HepG2 (cell line): ENCODE measurements at regions of chr20 and their contacts with region 1.

Region 1: DNA sequence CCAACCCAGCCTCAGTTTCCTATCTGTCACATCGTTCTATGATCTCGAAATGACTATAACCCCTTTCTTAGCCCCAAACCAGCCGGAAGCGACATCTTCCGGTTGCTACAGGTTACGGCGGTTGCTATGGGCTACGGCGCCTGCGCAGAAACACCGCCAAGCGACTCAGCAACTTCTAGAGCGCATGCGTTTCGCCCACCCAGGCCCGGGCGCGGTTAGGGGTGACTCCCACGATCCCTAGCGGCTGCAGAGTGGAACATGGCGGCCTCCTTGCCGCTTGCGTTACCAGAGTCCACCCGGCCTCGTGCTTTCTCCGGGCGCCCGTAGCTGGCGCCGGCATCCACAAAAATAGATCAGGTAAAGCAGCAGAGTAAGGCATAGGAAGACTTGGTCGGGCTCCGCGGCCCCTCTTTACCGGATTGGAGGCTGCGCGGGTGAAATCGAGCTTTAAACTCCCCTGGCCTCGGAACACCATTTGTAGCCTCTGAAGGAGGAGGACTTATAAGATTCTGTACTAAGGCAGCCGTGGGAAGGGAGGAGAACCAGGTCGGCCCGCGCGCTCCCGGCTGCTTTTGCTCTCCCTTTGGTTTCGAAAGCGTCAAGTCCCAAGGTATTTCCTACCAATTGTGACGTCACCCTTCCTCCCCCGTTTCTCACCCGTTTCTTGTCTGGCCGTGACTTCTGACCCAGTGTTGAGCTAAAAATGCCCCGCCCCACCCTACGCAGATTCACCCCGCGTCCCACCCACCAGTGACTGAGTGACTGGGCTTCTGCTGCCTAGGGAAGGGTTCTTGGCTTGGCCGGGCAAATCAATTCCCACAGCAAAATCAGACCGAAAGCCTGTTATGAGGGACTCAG is 3.5 kb downstream of the SDCBP2 start:
- DNase-seq: peak; percentile 97
- ATAC-seq: peak; percentile 79
- H3K4me3 ChIP-seq: peak overlapping the region; percentile 80 to 98 (median 96)
- H3K27ac ChIP-seq: peak overlapping the region; percentile 98
- H3K4me1 ChIP-seq: peaks cover 69% of the 10 kb centered on the region
- H3K27me3 ChIP-seq: no peaks in the 10 kb centered on the region; a peak in 2 of 5 replicates
- CTCF ChIP-seq: peak; percentile 43; the same call in 1 of the 2 replicates
- EP300 ChIP-seq: peak in 1 of 2 experiments; percentile 20; a peak in 3 of 4 replicates
- POLR2A ChIP-seq: peak; percentile 95 to 98
- RAD21 ChIP-seq: peak; percentile 66

Region 2: GRCh38 chr20:1313236-1313964 is 12.0 kb before region 1 on chr20:
- CTCF ChIA-PET with region 1: no interaction called
- POLR2A ChIA-PET with region 1: interaction called, 8 read pairs
- in situ Hi-C with region 1: no loop called
- intact Hi-C with region 1: loop called (anchors 1 kb)
- DNase-seq: peak; percentile 71
- ATAC-seq: peak; percentile 83
- H3K4me3 ChIP-seq: no peak overlapping the region
- H3K27ac ChIP-seq: no peak overlapping the region
- H3K4me1 ChIP-seq: peaks cover 18% of the 10 kb centered on the region
- H3K27me3 ChIP-seq: peaks cover 0 to 3% of the 10 kb centered on the region in 2 experiments; a peak in 3 of 5 replicates
- CTCF ChIP-seq: peak; percentile 97
- EP300 ChIP-seq: no peak
- POLR2A ChIP-seq: no peak
- RAD21 ChIP-seq: peak; percentile 95

Region 3: DNA sequence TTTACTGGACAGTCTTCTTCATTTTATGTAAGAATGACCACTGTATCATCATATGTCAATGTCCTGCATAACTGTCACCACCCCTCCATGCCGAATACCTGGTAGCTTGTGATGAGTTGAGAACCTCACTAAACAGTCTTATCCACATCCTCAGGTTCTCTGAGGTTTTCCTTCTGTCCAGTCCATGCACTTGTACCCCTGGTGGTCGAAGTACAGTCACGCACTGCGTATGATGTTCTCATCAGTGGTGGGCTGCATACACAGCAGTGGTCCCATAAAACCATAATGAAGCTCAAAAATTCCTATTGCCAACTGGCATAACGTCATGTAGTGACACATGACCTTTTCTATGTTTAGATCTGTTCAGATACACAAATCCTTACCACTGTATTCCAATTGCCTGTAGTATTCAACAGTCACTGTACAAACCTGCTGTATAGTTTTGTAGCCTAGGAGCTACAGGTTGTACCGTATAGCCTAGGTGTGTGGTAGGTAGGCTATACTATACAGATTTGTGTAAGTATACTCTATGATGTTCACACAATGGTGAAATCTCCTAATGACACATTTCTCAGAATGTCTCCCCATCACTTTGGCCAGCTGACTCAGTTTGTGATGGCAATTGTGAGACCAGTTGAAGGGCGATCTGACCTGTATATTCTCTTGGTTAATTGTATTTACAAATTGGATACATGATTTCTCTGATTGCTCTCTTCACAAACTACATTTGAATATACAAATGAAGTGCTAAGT is 34.9 kb after region 1 on chr20:
- CTCF ChIA-PET with region 1: no interaction called
- POLR2A ChIA-PET with region 1: interaction called, 4 read pairs
- in situ Hi-C with region 1: no loop called
- intact Hi-C with region 1: loop called (anchors 5 kb)
- DNase-seq: no peak
- ATAC-seq: peak; percentile 66
- H3K4me3 ChIP-seq: no peak overlapping the region
- H3K27ac ChIP-seq: no peak overlapping the region
- H3K4me1 ChIP-seq: no peaks in the 10 kb centered on the region
- H3K27me3 ChIP-seq: no peaks in the 10 kb centered on the region
- CTCF ChIP-seq: no peak
- EP300 ChIP-seq: no peak
- POLR2A ChIP-seq: no peak
- RAD21 ChIP-seq: no peak

Region 4: GRCh38 chr20:1392823-1393506 is 67.6 kb after region 1 on chr20 and contains the start of gene FKBP1A:
- CTCF ChIA-PET with region 1: no interaction called
- POLR2A ChIA-PET with region 1: interaction called, 41 read pairs
- in situ Hi-C with region 1: no loop called
- intact Hi-C with region 1: loop called (anchors 1 kb)
- DNase-seq: peak; percentile 94
- ATAC-seq: peak; percentile 95
- H3K4me3 ChIP-seq: peak within 1 kb of the TSS; percentile 78 to 91 (median 91)
- H3K27ac ChIP-seq: peak within 1 kb of the TSS; percentile 36
- H3K4me1 ChIP-seq: peaks cover 53% of the 10 kb centered on the region
- H3K27me3 ChIP-seq: peaks cover 0 to 17% of the 10 kb centered on the region in 2 experiments; a peak in 2 of 5 replicates
- CTCF ChIP-seq: peak; percentile 48
- EP300 ChIP-seq: peak in 1 of 2 experiments; percentile 64; a peak in 3 of 4 replicates
- POLR2A ChIP-seq: peak; percentile 69 to 98
- RAD21 ChIP-seq: peak; percentile 71
- total RNA-seq, gene FKBP1A: 119 and 188 TPM in 2 replicates

Region 5: GRCh38 chr20:1466211-1467081 is 141.0 kb after region 1 on chr20 and contains the start of gene NSFL1C:
- CTCF ChIA-PET with region 1: no interaction called
- POLR2A ChIA-PET with region 1: interaction called, 32 read pairs
- in situ Hi-C with region 1: no loop called
- intact Hi-C with region 1: loop called (anchors 1 kb)
- DNase-seq: peak; percentile 92
- ATAC-seq: peak; percentile 87
- H3K4me3 ChIP-seq: peak within 1 kb of the TSS; percentile 85 to 99 (median 98)
- H3K27ac ChIP-seq: peak within 1 kb of the TSS; percentile 80
- H3K4me1 ChIP-seq: peaks cover 69% of the 10 kb centered on the region
- H3K27me3 ChIP-seq: no peaks in the 10 kb centered on the region; a peak in 2 of 5 replicates
- CTCF ChIP-seq: peak; percentile 95
- EP300 ChIP-seq: peak; percentile 46 to 72
- POLR2A ChIP-seq: peak; percentile 88
- RAD21 ChIP-seq: peak; percentile 93
- total RNA-seq, gene NSFL1C: 62.7 and 74.0 TPM in 2 replicates

Region 6: DNA sequence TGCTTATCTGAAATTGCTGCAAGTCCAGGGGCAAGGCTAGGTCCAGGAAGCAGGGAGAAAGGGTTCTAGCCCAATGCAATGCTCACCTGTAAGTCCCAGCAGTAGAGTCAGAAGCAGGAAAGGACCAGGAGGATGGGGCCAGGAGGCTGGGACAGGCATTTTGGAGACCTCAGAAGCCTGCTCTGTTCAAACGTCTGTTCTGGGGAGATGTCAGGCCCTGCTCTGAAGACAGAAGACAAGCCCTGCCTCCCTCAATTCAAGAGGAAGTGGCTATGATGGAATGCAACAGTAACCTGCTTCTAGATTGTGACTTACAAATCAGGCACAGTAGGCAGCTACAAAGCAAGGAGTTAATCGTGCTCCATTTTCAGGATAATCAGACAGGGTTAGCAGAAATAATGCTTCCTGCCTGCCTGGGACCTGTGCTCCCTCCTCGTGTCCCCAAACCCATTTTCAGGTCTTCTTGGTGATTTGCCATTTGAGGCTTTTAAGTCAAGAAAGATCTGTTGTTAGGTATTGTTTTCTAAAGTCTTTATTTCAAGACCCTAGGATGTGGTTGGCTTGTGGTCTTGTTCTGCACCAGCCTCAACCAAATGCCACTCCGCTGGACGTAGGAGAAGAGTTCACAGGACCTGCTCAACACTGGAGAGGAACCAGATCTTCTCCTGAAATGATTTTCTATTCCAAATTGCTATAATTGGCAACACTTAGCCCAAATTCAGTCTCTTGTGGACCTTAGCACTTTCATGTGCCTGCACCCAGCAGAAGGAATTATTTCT is 332.3 kb after region 1 on chr20 and contains the start of gene SIRPG:
- CTCF ChIA-PET with region 1: no interaction called
- POLR2A ChIA-PET with region 1: no interaction called
- in situ Hi-C with region 1: no loop called
- intact Hi-C with region 1: no loop called
- DNase-seq: no peak
- ATAC-seq: no peak
- H3K4me3 ChIP-seq: no peak within 1 kb of the TSS
- H3K27ac ChIP-seq: no peak within 1 kb of the TSS
- H3K4me1 ChIP-seq: no peaks in the 10 kb centered on the region
- H3K27me3 ChIP-seq: no peaks in the 10 kb centered on the region
- CTCF ChIP-seq: no peak
- EP300 ChIP-seq: no peak
- POLR2A ChIP-seq: no peak
- RAD21 ChIP-seq: no peak
- total RNA-seq, gene SIRPG: not detected in 2 replicates